Aorta (tissue), 5 donors: ENCODE measurements at regions of chr5 and their contacts with region 1.

Region 1: DNA sequence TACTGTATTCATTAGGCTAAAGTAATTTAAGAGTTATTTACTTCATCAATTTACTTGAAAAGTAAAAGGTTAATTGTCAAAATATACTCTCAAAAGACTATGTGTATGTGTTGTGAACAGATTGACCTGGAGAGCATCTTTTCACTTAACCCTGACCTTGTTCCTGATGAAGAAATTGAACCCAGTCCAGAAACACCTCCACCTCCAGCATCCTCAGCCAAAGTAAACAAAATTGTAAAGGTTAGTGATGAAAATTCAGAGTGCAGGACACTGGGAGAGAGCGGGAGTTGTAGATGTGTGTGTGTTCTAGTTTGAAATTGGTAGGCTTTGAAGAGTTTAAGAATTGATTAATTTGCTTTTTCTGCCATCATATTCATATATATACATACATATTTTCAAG is 41.9 kb downstream of the KIF2A start:
- DNase-seq: no peak
- ATAC-seq: no peak
- H3K4me3 ChIP-seq: no peak overlapping the region
- H3K27ac ChIP-seq: no peak overlapping the region
- H3K4me1 ChIP-seq: no peaks in the 10 kb centered on the region
- H3K27me3 ChIP-seq: no peaks in the 10 kb centered on the region

Region 2: GRCh38 chr5:62231576-62231975 is 116.4 kb before region 1 on chr5:
- intact Hi-C with region 1: loop called in 1 of 2 experiments (anchors 5 kb)
- DNase-seq: no peak
- ATAC-seq: no peak
- H3K4me3 ChIP-seq: no peak overlapping the region
- H3K27ac ChIP-seq: no peak overlapping the region
- H3K4me1 ChIP-seq: no peaks in the 10 kb centered on the region
- H3K27me3 ChIP-seq: no peaks in the 10 kb centered on the region

Region 3: DNA sequence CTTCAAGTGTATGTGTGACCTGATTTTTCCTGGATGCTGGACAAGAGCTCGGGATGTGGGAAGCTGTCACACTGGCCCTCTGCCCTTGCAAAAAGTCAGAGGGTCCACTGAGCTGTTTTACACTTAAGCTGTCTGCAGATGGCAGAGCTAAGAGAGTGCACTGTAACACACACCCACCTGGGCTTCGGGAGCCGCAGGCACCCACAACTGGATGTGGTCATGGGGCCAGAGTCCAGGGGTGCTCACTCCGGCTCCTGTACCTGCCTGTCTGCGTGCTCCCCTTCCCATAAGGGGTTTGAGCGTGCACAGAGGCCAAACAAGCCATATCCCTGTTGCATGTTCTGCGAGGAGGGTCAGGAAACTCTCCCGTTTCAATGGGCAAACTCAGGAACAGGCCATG is 313.2 kb after region 1 on chr5:
- intact Hi-C with region 1: no loop called
- DNase-seq: no peak
- ATAC-seq: no peak
- H3K4me3 ChIP-seq: no peak overlapping the region
- H3K27ac ChIP-seq: no peak overlapping the region
- H3K4me1 ChIP-seq: no peaks in the 10 kb centered on the region
- H3K27me3 ChIP-seq: no peaks in the 10 kb centered on the region